Ovary (tissue), 10 donors: ENCODE measurements at regions of chrX and their contacts with region 1.

Region 1: GRCh38 chrX:127129510-127129909 is 310.0 kb downstream of the PRR32 start:
- DNase-seq: no peak
- H3K4me3 ChIP-seq: no peak overlapping the region
- H3K27ac ChIP-seq: no peak overlapping the region
- H3K4me1 ChIP-seq: no peaks in the 10 kb centered on the region
- H3K27me3 ChIP-seq: no peaks in the 10 kb centered on the region
- CTCF ChIP-seq: no peak
- EP300 ChIP-seq: no peak
- POLR2A ChIP-seq: no peak

Region 2: DNA sequence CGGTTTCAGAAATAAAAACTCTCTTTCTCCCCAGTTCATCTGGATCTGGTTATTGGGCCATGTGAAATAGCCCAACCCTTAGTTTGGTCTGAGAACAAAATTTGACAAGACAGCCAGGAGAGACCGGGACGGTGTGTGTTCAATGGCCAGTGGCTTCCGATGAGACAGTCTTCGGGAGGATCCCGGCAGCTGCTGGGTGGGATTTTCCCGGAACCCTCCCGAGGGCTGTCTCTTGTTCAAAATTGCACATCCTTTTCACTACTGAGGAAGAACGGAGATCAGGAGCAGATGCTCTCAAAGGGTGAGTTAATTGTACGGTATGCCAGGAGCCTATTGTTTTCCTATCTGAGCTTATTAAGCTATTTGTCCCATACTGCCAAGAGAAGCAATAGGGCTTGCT is 143.5 kb before region 1 on chrX:
- intact Hi-C with region 1: no loop called
- DNase-seq: no peak
- H3K4me3 ChIP-seq: no peak overlapping the region
- H3K27ac ChIP-seq: no peak overlapping the region
- H3K4me1 ChIP-seq: no peaks in the 10 kb centered on the region
- H3K27me3 ChIP-seq: no peaks in the 10 kb centered on the region
- CTCF ChIP-seq: no peak
- EP300 ChIP-seq: no peak
- POLR2A ChIP-seq: no peak

Region 3: GRCh38 chrX:127005721-127006120 is 123.8 kb before region 1 on chrX:
- intact Hi-C with region 1: no loop called
- DNase-seq: no peak
- H3K4me3 ChIP-seq: no peak overlapping the region
- H3K27ac ChIP-seq: no peak overlapping the region
- H3K4me1 ChIP-seq: no peaks in the 10 kb centered on the region
- H3K27me3 ChIP-seq: no peaks in the 10 kb centered on the region
- CTCF ChIP-seq: no peak
- EP300 ChIP-seq: no peak
- POLR2A ChIP-seq: no peak

Region 4: GRCh38 chrX:127112726-127113125 is 16.8 kb before region 1 on chrX:
- intact Hi-C with region 1: loop called in 1 of 4 experiments (anchors 2 kb)
- DNase-seq: no peak
- H3K4me3 ChIP-seq: no peak overlapping the region
- H3K27ac ChIP-seq: no peak overlapping the region
- H3K4me1 ChIP-seq: no peaks in the 10 kb centered on the region
- H3K27me3 ChIP-seq: no peaks in the 10 kb centered on the region
- CTCF ChIP-seq: no peak
- EP300 ChIP-seq: no peak
- POLR2A ChIP-seq: no peak

Region 5: DNA sequence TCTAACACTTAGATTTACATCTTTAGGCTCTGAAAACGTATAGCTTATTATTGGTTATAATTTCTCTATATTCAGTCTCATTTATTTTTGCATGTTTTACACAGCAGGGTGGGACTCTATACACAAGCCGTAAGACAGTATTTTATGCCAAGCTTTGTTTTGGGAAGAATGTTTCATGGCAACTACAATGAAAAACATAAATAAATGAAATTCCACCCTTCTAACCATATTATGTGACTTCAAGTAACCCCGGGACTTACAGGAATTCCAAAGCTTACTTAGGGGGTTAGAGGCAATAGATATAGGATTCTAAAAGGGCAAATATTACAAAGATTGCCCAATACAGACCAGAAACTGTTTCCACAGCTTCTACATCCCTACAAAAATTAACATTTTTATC is 60.9 kb after region 1 on chrX:
- intact Hi-C with region 1: no loop called
- DNase-seq: no peak
- H3K4me3 ChIP-seq: no peak overlapping the region
- H3K27ac ChIP-seq: no peak overlapping the region
- H3K4me1 ChIP-seq: no peaks in the 10 kb centered on the region
- H3K27me3 ChIP-seq: no peaks in the 10 kb centered on the region
- CTCF ChIP-seq: no peak
- EP300 ChIP-seq: no peak
- POLR2A ChIP-seq: no peak

Region 6: DNA sequence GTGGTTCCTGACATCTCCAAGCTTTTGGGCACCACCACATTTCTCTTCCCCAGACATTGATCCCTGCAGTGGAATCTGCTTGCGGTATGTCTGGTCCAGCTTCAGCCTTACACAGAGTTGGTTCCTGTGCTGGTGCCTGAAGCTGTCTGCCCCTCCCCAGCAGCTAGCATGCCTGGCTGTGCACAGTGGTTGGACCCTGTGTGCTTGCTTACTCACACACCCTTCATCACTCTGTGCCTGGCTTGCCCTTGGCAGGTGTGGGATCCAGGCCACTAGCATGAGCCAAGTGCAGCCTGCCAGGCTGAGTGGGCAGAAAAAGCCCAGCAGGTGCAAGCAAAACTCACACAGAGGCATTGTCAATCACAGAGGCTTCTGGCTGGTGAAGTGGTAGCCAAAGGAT is 448.9 kb after region 1 on chrX:
- intact Hi-C with region 1: no loop called
- DNase-seq: no peak
- H3K4me3 ChIP-seq: no peak overlapping the region
- H3K27ac ChIP-seq: no peak overlapping the region
- H3K4me1 ChIP-seq: no peaks in the 10 kb centered on the region
- H3K27me3 ChIP-seq: no peaks in the 10 kb centered on the region
- CTCF ChIP-seq: no peak
- EP300 ChIP-seq: no peak
- POLR2A ChIP-seq: no peak